ENCODE measurements at regions of chr18 and their contacts with region 1.

Region 1: GRCh38 chr18:11553098-11553940 is 56.1 kb upstream of the SLC35G4 start:
- DNase-seq: peak in 4 of 9 experiments; percentile 7 to 59 (median 28)
- ATAC-seq: no peak
- H3K4me3 ChIP-seq: no peak overlapping the region
- H3K4me3 Mint-ChIP-seq: no peak overlapping the region
- H3K27ac ChIP-seq: no peak overlapping the region
- H3K27ac Mint-ChIP-seq: no peak overlapping the region
- H3K4me1 ChIP-seq: no peaks in the 10 kb centered on the region
- H3K4me1 Mint-ChIP-seq: peaks cover 4% of the 10 kb centered on the region
- H3K27me3 ChIP-seq: no peaks in the 10 kb centered on the region
- H3K27me3 Mint-ChIP-seq: peaks cover 3% of the 10 kb centered on the region
- CTCF ChIP-seq: peak; percentile 78

Region 2: GRCh38 chr18:10560450-10561045 is 992.8 kb before region 1 on chr18:
- CTCF ChIA-PET with region 1: interaction called, 6 read pairs
- POLR2A ChIA-PET with region 1: no interaction called
- intact Hi-C with region 1: loop called (anchors 2 to 5 kb)
- DNase-seq: peak; percentile 18 to 64 (median 49)
- ATAC-seq: peak; percentile 49
- H3K4me3 ChIP-seq: no peak overlapping the region
- H3K4me3 Mint-ChIP-seq: no peak overlapping the region
- H3K27ac ChIP-seq: no peak overlapping the region
- H3K27ac Mint-ChIP-seq: no peak overlapping the region
- H3K4me1 ChIP-seq: peaks cover 6% of the 10 kb centered on the region
- H3K4me1 Mint-ChIP-seq: peaks cover 9% of the 10 kb centered on the region
- H3K27me3 ChIP-seq: no peaks in the 10 kb centered on the region
- H3K27me3 Mint-ChIP-seq: no peaks in the 10 kb centered on the region
- CTCF ChIP-seq: peak; percentile 67

Region 3: DNA sequence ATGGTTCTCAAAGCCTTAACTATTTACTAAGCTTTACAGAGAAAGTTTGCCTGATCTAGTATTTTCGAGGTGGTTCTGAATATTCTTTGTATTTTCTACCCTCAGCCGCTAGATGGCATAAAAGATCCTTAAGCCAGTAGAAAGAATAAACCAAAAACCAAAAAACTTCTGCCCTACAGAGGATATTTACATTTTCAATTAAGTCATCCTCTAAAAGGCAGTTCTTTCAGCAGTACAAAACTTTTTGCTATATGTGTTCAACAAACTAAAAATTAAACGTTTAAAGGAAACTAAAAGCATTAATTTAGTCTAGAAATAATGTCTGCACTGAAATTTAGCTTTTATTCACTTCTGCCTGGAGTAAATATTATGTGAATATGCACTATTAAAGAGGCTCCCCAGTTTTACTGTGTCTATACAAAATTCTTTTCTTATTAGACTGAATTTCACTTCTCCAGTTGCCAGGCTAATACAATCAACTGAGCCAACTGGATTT is 701.4 kb before region 1 on chr18:
- CTCF ChIA-PET with region 1: interaction called, 5 read pairs
- POLR2A ChIA-PET with region 1: no interaction called
- intact Hi-C with region 1: loop called in 1 of 2 experiments (anchors 5 kb)
- DNase-seq: peak in 2 of 9 experiments; percentile 16 to 38
- ATAC-seq: no peak
- H3K4me3 ChIP-seq: no peak overlapping the region
- H3K4me3 Mint-ChIP-seq: no peak overlapping the region
- H3K27ac ChIP-seq: no peak overlapping the region
- H3K27ac Mint-ChIP-seq: no peak overlapping the region
- H3K4me1 ChIP-seq: no peaks in the 10 kb centered on the region
- H3K4me1 Mint-ChIP-seq: no peaks in the 10 kb centered on the region
- H3K27me3 ChIP-seq: no peaks in the 10 kb centered on the region
- H3K27me3 Mint-ChIP-seq: peaks cover 5% of the 10 kb centered on the region
- CTCF ChIP-seq: peak; percentile 43

Region 4: GRCh38 chr18:11224153-11224552 is 329.2 kb before region 1 on chr18:
- CTCF ChIA-PET with region 1: no interaction called
- POLR2A ChIA-PET with region 1: no interaction called
- intact Hi-C with region 1: no loop called
- DNase-seq: no peak
- ATAC-seq: no peak
- H3K4me3 ChIP-seq: no peak overlapping the region
- H3K4me3 Mint-ChIP-seq: no peak overlapping the region
- H3K27ac ChIP-seq: no peak overlapping the region
- H3K27ac Mint-ChIP-seq: no peak overlapping the region
- H3K4me1 ChIP-seq: no peaks in the 10 kb centered on the region
- H3K4me1 Mint-ChIP-seq: no peaks in the 10 kb centered on the region
- H3K27me3 ChIP-seq: no peaks in the 10 kb centered on the region
- H3K27me3 Mint-ChIP-seq: no peaks in the 10 kb centered on the region
- CTCF ChIP-seq: no peak

Region 5: DNA sequence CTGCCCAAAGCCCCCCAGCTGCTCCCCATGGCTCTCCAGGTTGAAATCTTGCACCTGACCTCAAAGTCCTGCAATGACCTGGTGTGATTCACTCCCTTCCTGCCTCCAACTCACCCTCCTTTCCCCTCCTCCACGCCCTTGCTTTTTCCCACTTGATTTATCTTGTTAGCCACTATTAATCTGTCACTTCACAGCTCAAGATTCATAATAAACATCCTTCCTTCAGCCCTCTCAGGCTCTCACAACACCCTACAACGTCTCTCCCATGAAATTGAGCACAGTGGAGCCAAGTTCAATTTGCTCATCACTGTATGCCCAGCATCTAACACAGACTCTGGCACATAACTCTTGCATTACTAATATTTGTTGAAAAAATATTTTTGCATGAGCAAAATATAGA is 29.5 kb before region 1 on chr18:
- CTCF ChIA-PET with region 1: interaction called, 10 read pairs
- POLR2A ChIA-PET with region 1: no interaction called
- intact Hi-C with region 1: no loop called
- DNase-seq: no peak
- ATAC-seq: no peak
- H3K4me3 ChIP-seq: no peak overlapping the region
- H3K4me3 Mint-ChIP-seq: no peak overlapping the region
- H3K27ac ChIP-seq: no peak overlapping the region
- H3K27ac Mint-ChIP-seq: no peak overlapping the region
- H3K4me1 ChIP-seq: no peaks in the 10 kb centered on the region
- H3K4me1 Mint-ChIP-seq: no peaks in the 10 kb centered on the region
- H3K27me3 ChIP-seq: no peaks in the 10 kb centered on the region
- H3K27me3 Mint-ChIP-seq: no peaks in the 10 kb centered on the region
- CTCF ChIP-seq: no peak

Region 6: DNA sequence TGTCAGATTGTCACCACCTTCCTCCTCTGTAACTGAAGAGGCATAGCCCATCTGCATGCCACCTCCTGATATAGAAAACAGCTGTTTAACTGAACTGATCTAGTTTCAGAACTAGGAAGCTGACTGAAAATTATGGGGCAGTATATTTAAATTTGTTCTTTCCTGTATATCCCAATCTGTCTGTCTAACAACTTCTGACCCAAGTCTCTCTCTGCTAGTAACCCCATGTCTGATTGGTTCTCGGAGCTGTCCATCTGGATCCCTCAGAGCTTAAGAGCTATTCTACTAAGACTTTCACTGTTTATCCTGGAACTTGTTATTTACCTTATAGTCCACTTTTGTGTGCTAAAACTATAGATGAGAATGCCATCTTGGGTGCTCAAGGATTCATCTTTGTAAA is 12.1 kb before region 1 on chr18:
- CTCF ChIA-PET with region 1: interaction called, 19 read pairs
- POLR2A ChIA-PET with region 1: no interaction called
- intact Hi-C with region 1: no loop called
- DNase-seq: no peak
- ATAC-seq: no peak
- H3K4me3 ChIP-seq: no peak overlapping the region
- H3K4me3 Mint-ChIP-seq: no peak overlapping the region
- H3K27ac ChIP-seq: no peak overlapping the region
- H3K27ac Mint-ChIP-seq: no peak overlapping the region
- H3K4me1 ChIP-seq: no peaks in the 10 kb centered on the region
- H3K4me1 Mint-ChIP-seq: no peaks in the 10 kb centered on the region
- H3K27me3 ChIP-seq: no peaks in the 10 kb centered on the region
- H3K27me3 Mint-ChIP-seq: no peaks in the 10 kb centered on the region
- CTCF ChIP-seq: no peak